ENCODE measurements at regions of chr2 and their contacts with region 1.

Region 1: DNA sequence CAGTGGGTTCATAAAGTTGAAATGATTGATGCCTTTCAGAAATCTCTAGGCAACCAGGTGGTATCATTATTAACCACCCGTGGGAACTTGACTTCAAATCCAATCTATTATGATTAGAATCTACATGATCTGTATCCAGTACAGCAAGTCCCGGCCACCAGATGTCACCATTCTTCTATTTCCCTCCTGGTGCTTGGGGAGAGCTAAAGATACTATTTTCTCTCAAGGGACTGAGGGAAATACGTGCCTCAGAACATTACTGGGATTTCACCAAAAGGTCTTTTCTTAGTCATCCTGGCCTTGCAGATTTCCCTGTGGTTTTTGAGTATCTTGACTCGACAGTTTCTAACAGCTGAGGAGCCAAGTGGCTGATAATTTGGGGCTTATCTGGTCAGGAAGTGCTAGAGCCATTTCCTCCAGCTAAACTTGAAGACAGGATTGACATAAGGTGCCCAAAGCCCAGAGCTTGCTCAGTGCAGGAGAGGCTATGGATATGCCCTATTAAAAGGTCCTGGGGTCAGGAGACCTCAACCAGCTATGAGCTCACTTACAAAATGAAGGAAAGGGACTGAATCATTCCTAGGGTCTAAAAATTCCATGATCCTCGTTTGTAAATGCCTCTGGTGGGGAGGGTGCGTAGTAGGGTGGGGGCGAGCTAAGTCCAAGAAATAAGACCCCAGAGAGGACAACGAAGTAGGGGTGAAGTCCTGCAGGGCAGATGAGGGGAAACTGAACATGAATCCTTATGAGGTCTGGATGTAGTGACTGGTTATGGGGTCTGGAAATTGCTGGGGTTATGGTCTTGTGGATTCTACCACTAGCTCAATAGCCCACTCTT is 135.4 kb upstream of the MGAT5 start:
- DNase-seq: peak; percentile 74 to 92 (median 80)
- ATAC-seq: peak; percentile 39
- H3K4me3 ChIP-seq: peak overlapping the region; percentile 76
- H3K4me3 Mint-ChIP-seq: peak overlapping the region; percentile 100
- H3K27ac ChIP-seq: no peak overlapping the region
- H3K27ac Mint-ChIP-seq: peak overlapping the region; percentile 93
- H3K4me1 ChIP-seq: peaks cover 36% of the 10 kb centered on the region
- H3K4me1 Mint-ChIP-seq: peaks cover 39% of the 10 kb centered on the region
- H3K27me3 ChIP-seq: no peaks in the 10 kb centered on the region
- H3K27me3 Mint-ChIP-seq: no peaks in the 10 kb centered on the region
- CTCF ChIP-seq: peak; percentile 77

Region 2: DNA sequence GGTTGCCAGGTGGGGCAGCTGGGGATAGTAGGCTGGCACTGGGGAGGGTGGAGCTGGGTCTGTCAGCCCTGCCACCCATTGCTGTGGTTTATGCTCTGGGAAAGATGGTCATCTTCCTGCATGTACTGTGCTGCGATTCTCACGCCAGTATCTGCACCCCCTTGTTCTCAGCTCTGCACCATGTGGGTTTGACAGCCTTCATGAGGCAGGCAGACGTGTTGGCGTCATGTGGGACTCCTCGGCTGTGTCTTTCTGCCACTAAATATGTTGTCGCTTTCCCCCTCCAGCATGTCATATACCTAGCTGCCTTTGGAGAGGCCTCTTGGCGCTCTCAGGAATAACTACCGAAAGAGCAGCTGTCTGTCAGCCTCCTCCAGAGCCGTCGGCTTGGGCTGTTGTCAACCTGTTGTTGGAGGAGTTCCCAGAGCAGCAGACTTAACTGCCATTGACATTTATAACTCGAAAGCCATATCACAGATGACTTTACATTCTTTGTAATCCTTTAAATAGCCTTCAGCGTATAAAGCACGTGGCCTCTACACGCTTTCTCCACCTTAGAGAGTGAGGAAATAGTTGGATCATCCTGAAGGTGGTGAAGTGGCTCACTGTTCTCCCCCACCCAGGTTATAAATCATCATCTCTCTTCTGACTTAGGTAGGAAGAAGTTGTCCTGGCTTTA is 55.0 kb after region 1 on chr2:
- CTCF ChIA-PET with region 1: interaction called, 4 read pairs
- POLR2A ChIA-PET with region 1: interaction called, 7 read pairs
- intact Hi-C with region 1: loop called in 1 of 2 experiments (anchors 1 kb)
- DNase-seq: no peak
- ATAC-seq: peak; percentile 16
- H3K4me3 ChIP-seq: no peak overlapping the region
- H3K4me3 Mint-ChIP-seq: no peak overlapping the region
- H3K27ac ChIP-seq: no peak overlapping the region
- H3K27ac Mint-ChIP-seq: peak overlapping the region; percentile 72
- H3K4me1 ChIP-seq: peaks cover 55% of the 10 kb centered on the region
- H3K4me1 Mint-ChIP-seq: peaks cover 92% of the 10 kb centered on the region
- H3K27me3 ChIP-seq: no peaks in the 10 kb centered on the region
- H3K27me3 Mint-ChIP-seq: no peaks in the 10 kb centered on the region
- CTCF ChIP-seq: no peak

Region 3: DNA sequence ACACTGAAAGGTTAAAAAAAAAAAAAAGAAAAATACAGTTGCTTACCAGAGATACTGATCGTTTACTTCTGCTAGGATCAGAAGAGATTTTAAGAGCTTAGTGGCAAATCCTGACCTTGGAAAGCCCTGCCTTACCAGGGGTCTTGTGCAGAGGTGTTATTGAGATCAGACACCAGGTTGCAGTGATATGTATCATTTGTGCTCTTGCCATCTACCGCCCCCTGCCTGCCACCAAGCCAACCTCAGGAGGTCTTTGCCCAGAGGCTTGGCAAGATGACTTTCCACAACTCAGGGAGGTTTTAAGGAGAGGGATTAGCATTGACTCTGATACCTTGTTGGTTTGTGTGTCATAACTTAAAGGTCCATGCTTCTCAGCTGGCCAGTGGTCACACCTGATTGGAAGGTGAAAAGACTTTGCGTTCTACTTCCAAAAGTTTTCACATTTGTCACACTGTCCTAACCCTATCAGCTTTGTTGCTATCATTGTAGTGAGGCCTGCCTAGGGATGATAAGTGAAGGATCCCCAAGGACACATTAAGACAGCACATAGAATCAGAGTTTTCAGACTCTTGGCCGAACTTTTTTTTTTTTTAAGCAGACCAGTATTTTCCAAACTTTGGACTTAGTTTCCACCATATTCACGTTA is 89.2 kb after region 1 on chr2:
- CTCF ChIA-PET with region 1: interaction called, 28 read pairs
- POLR2A ChIA-PET with region 1: interaction called, 49 read pairs
- intact Hi-C with region 1: loop called (anchors 5 kb)
- DNase-seq: peak; percentile 49 to 83 (median 61)
- ATAC-seq: peak; percentile 93
- H3K4me3 ChIP-seq: no peak overlapping the region
- H3K4me3 Mint-ChIP-seq: no peak overlapping the region
- H3K27ac ChIP-seq: no peak overlapping the region
- H3K27ac Mint-ChIP-seq: no peak overlapping the region
- H3K4me1 ChIP-seq: peaks cover 35% of the 10 kb centered on the region
- H3K4me1 Mint-ChIP-seq: peaks cover 5% of the 10 kb centered on the region
- H3K27me3 ChIP-seq: no peaks in the 10 kb centered on the region
- H3K27me3 Mint-ChIP-seq: no peaks in the 10 kb centered on the region
- CTCF ChIP-seq: peak; percentile 64

Region 4: DNA sequence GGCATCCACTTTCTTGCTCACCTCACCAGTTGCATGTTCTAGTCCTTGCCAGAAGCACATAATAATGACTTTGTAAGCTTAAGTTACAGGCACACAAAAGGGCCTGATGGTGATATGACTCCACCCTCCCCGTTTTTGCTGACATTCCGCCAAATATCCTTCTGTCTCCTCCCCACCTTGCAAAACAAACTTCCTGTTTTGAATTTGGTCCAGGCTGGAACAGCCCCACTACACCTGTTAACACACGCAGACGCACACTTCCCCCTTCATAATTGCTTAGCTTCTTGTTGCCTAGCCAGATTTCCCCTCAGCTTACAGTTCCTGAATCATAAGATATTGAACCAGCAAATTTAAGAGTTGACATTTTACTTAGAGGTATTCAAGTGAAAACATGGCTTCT is 135.3 kb after region 1 on chr2 and contains the start of gene MGAT5:
- CTCF ChIA-PET with region 1: interaction called, 4 read pairs
- POLR2A ChIA-PET with region 1: interaction called, 11 read pairs
- intact Hi-C with region 1: no loop called
- DNase-seq: no peak
- ATAC-seq: no peak
- H3K4me3 ChIP-seq: no peak within 1 kb of the TSS
- H3K4me3 Mint-ChIP-seq: peak within 1 kb of the TSS; percentile 32
- H3K27ac ChIP-seq: no peak within 1 kb of the TSS
- H3K27ac Mint-ChIP-seq: peak within 1 kb of the TSS; percentile 51
- H3K4me1 ChIP-seq: peaks cover 79% of the 10 kb centered on the region
- H3K4me1 Mint-ChIP-seq: peaks cover 98% of the 10 kb centered on the region
- H3K27me3 ChIP-seq: no peaks in the 10 kb centered on the region
- H3K27me3 Mint-ChIP-seq: no peaks in the 10 kb centered on the region
- CTCF ChIP-seq: no peak
- total RNA-seq, gene MGAT5: 77.5 to 77.8 TPM

Region 5: DNA sequence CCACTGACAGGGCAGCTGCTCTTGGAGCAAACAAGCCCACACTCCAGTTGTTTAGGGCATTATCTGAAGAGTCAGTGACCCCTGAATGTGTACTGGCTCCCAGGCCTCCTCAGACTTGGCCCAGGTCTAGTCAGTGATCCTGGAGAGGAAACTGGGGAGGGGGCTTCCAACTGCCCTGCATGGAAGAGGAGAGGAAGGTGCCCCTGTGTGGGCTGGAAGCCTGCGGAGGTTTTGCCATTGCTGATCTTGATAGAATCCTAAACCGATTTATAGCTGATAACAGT is 332.8 kb after region 1 on chr2:
- CTCF ChIA-PET with region 1: interaction called, 4 read pairs
- POLR2A ChIA-PET with region 1: no interaction called
- intact Hi-C with region 1: loop called in 1 of 2 experiments (anchors 2 kb)
- DNase-seq: no peak
- ATAC-seq: no peak
- H3K4me3 ChIP-seq: no peak overlapping the region
- H3K4me3 Mint-ChIP-seq: no peak overlapping the region
- H3K27ac ChIP-seq: no peak overlapping the region
- H3K27ac Mint-ChIP-seq: peak overlapping the region; percentile 33
- H3K4me1 ChIP-seq: no peaks in the 10 kb centered on the region
- H3K4me1 Mint-ChIP-seq: no peaks in the 10 kb centered on the region
- H3K27me3 ChIP-seq: no peaks in the 10 kb centered on the region
- H3K27me3 Mint-ChIP-seq: no peaks in the 10 kb centered on the region
- CTCF ChIP-seq: no peak

Region 6: GRCh38 chr2:134897932-134898331 is 779.4 kb after region 1 on chr2:
- CTCF ChIA-PET with region 1: no interaction called
- POLR2A ChIA-PET with region 1: no interaction called
- intact Hi-C with region 1: loop called (anchors 2 kb)
- DNase-seq: peak in 3 of 14 experiments; percentile 11 to 23 (median 18)
- ATAC-seq: no peak
- H3K4me3 ChIP-seq: no peak overlapping the region
- H3K4me3 Mint-ChIP-seq: no peak overlapping the region
- H3K27ac ChIP-seq: no peak overlapping the region
- H3K27ac Mint-ChIP-seq: no peak overlapping the region
- H3K4me1 ChIP-seq: no peaks in the 10 kb centered on the region
- H3K4me1 Mint-ChIP-seq: no peaks in the 10 kb centered on the region
- H3K27me3 ChIP-seq: no peaks in the 10 kb centered on the region
- H3K27me3 Mint-ChIP-seq: no peaks in the 10 kb centered on the region
- CTCF ChIP-seq: peak; percentile 64

Region 7: GRCh38 chr2:135525786-135526185 is 1407.3 kb after region 1 on chr2:
- CTCF ChIA-PET with region 1: no interaction called
- POLR2A ChIA-PET with region 1: no interaction called
- intact Hi-C with region 1: loop called in 1 of 2 experiments (anchors 10 kb)
- DNase-seq: no peak
- ATAC-seq: no peak
- H3K4me3 ChIP-seq: no peak overlapping the region
- H3K4me3 Mint-ChIP-seq: no peak overlapping the region
- H3K27ac ChIP-seq: no peak overlapping the region
- H3K27ac Mint-ChIP-seq: no peak overlapping the region
- H3K4me1 ChIP-seq: peaks cover 9% of the 10 kb centered on the region
- H3K4me1 Mint-ChIP-seq: no peaks in the 10 kb centered on the region
- H3K27me3 ChIP-seq: no peaks in the 10 kb centered on the region
- H3K27me3 Mint-ChIP-seq: no peaks in the 10 kb centered on the region
- CTCF ChIP-seq: no peak